ENCODE measurements at regions of chr1 and their contacts with region 1.

Region 1: DNA sequence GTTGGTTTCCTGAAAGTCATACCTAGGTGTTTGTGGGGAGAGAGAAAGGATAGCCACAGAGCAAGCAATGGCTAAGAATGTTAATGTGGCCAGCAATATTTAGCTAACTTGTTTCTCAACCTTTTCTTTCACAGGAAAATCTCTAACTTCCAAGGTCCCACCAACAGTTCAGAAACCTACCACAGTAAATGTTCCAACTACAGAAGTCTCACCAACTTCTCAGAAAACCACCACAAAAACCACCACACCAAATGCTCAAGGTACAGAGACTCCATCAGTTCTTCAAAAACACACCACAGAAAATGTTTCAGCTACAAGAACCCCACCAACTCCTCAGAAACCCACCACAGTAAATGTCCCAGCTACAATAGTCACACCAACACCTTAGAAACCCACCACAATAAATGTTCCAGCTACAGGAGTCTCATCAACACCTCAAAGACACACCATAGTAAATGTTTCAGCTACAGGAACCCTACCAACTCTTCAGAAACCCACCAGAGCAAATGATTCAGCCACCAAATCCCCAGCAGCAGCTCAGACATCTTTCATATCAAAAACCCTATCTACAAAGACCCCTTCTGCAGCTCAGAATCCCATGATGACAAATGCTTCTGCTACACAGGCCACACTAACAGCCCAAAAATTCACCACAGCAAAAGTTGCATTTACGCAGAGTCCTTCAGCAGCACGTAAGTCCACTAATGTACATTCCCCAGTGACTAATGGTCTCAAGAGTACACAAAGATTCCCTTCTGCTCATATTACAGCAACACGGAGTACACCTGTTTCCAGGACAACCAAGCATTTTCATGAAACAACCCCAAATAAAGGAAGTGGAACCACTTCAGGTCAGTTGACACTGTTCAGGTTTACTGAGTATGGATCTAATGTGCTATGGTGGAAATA is 15.3 kb downstream of the CD55 start:
- DNase-seq: no peak
- ATAC-seq: peak; percentile 80
- H3K4me3 Mint-ChIP-seq: peak overlapping the region; percentile 73
- H3K27ac Mint-ChIP-seq: peak overlapping the region; percentile 98
- H3K4me1 Mint-ChIP-seq: peaks cover 82% of the 10 kb centered on the region
- H3K27me3 Mint-ChIP-seq: no peaks in the 10 kb centered on the region
- CTCF ChIP-seq: no peak

Region 2: GRCh38 chr1:206930210-206930798 is 406.5 kb before region 1 on chr1:
- CTCF ChIA-PET with region 1: no interaction called
- POLR2A ChIA-PET with region 1: no interaction called
- intact Hi-C with region 1: loop called (anchors 1 kb)
- DNase-seq: peak; percentile 72
- ATAC-seq: peak; percentile 83
- H3K4me3 Mint-ChIP-seq: peak overlapping the region; percentile 79
- H3K27ac Mint-ChIP-seq: peak overlapping the region; percentile 99
- H3K4me1 Mint-ChIP-seq: peaks cover 67% of the 10 kb centered on the region
- H3K27me3 Mint-ChIP-seq: no peaks in the 10 kb centered on the region
- CTCF ChIP-seq: no peak

Region 3: GRCh38 chr1:207084701-207085180 is 252.1 kb before region 1 on chr1:
- CTCF ChIA-PET with region 1: interaction called, 15 read pairs
- POLR2A ChIA-PET with region 1: interaction called, 4 read pairs
- intact Hi-C with region 1: loop called (anchors 5 kb)
- DNase-seq: no peak
- ATAC-seq: peak; percentile 98
- H3K4me3 Mint-ChIP-seq: no peak overlapping the region
- H3K27ac Mint-ChIP-seq: no peak overlapping the region
- H3K4me1 Mint-ChIP-seq: peaks cover 9% of the 10 kb centered on the region
- H3K27me3 Mint-ChIP-seq: peaks cover 2% of the 10 kb centered on the region
- CTCF ChIP-seq: no peak

Region 4: DNA sequence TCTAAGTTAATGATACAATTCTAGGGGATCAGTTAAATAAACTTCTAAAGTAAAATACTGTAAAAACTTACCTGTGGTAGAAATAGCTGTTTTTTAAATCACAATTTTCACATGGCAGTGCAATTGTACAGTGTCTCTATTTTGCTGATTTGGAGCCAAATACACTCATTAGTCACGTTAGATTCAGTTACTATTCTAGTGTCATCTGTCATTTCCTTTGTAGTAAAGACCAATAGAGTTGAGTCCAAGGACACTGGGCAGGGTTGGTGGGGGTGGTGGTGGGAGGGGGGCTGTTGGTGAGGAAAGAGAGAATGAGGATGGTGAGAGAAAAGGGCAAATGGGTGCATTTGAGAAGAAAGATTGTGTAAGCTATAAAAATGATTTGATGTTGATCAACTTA is 18.2 kb after region 1 on chr1:
- CTCF ChIA-PET with region 1: interaction called, 3 read pairs
- POLR2A ChIA-PET with region 1: interaction called, 4 read pairs
- intact Hi-C with region 1: loop called (anchors 2 kb)
- DNase-seq: no peak
- ATAC-seq: no peak
- H3K4me3 Mint-ChIP-seq: no peak overlapping the region
- H3K27ac Mint-ChIP-seq: peak overlapping the region; percentile 35
- H3K4me1 Mint-ChIP-seq: peaks cover 66% of the 10 kb centered on the region
- H3K27me3 Mint-ChIP-seq: no peaks in the 10 kb centered on the region
- CTCF ChIP-seq: no peak

Region 5: GRCh38 chr1:207414606-207415108 is 77.8 kb after region 1 on chr1:
- CTCF ChIA-PET with region 1: no interaction called
- POLR2A ChIA-PET with region 1: interaction called, 4 read pairs
- intact Hi-C with region 1: loop called (anchors 2 kb)
- DNase-seq: no peak
- ATAC-seq: peak; percentile 76
- H3K4me3 Mint-ChIP-seq: peak overlapping the region; percentile 76
- H3K27ac Mint-ChIP-seq: peak overlapping the region; percentile 96
- H3K4me1 Mint-ChIP-seq: peaks cover 83% of the 10 kb centered on the region
- H3K27me3 Mint-ChIP-seq: no peaks in the 10 kb centered on the region
- CTCF ChIP-seq: no peak

Region 6: GRCh38 chr1:207499573-207499972 is 162.8 kb after region 1 on chr1:
- CTCF ChIA-PET with region 1: interaction called, 3 read pairs
- POLR2A ChIA-PET with region 1: no interaction called
- intact Hi-C with region 1: loop called (anchors 1 kb)
- DNase-seq: peak; percentile 42
- ATAC-seq: peak; percentile 61
- H3K4me3 Mint-ChIP-seq: no peak overlapping the region
- H3K27ac Mint-ChIP-seq: peak overlapping the region; percentile 64
- H3K4me1 Mint-ChIP-seq: peaks cover 38% of the 10 kb centered on the region
- H3K27me3 Mint-ChIP-seq: no peaks in the 10 kb centered on the region
- CTCF ChIP-seq: peak; percentile 60